HEK293 (cell line): ENCODE measurements at regions of chr1 and their contacts with region 1.

Region 1: GRCh38 chr1:15406609-15407559 is 2.8 kb upstream of the EFHD2 start:
- H3K4me3 ChIP-seq: no peak overlapping the region
- H3K27ac ChIP-seq: no peak overlapping the region
- H3K4me1 ChIP-seq: peaks cover 3% of the 10 kb centered on the region; the same call in 1 of the 2 replicates
- CTCF ChIP-seq: no peak

Region 2: GRCh38 chr1:15430787-15431570 is 24.1 kb after region 1 on chr1:
- CTCF ChIA-PET with region 1: interaction called, 10 read pairs
- POLR2A ChIA-PET with region 1: no interaction called
- H3K4me3 ChIP-seq: no peak overlapping the region
- H3K27ac ChIP-seq: no peak overlapping the region
- H3K4me1 ChIP-seq: no peaks in the 10 kb centered on the region
- CTCF ChIP-seq: peak; percentile 84